Natural killer cell (primary cell): ENCODE measurements at regions of chr4 and their contacts with region 1.

Region 1: DNA sequence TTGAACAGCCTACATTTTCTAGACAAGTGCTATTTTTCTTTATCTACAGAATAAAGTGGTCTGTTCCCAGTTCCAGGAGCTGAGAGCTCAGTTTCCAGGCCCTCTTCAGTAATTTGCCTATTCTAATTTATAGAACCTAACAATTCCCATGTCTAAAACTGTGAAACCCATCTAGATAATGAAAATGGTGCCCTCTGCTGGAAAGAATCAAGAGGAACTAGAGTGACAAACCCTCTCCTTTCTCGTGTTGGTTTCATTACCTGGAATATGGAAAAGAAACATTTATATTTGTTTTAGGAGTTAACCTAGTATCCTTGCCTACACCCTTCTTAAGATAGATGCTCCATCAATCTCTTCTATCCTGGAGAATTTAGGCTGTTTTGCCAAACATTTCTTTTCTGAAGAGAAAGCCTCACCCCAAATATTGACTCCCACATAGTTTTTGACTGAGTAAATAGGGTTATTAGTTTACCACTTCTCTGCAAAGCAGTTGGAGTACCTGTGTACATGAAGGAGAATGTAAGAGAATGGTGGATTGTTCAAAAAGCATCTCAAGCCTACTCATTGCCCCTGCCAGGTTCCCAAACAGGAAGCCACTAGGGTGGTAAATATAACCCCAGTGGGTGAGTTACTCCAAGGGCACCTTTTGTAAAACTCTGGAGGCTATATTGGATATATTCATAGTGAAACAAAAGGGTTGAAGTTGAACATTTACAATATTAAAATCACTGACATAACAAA is 121.6 kb downstream of the RASL11B start:
- DNase-seq: peak in 1 of 2 donors; percentile 68
- ATAC-seq: peak in 1 of 3 donors; percentile 55
- H3K4me3 ChIP-seq: no peak overlapping the region
- H3K4me3 Mint-ChIP-seq: no peak overlapping the region
- H3K27ac ChIP-seq: no peak overlapping the region
- H3K27ac Mint-ChIP-seq: no peak overlapping the region
- H3K4me1 ChIP-seq: no peaks in the 10 kb centered on the region
- H3K4me1 Mint-ChIP-seq: no peaks in the 10 kb centered on the region
- H3K27me3 ChIP-seq: no peaks in the 10 kb centered on the region
- H3K27me3 Mint-ChIP-seq: no peaks in the 10 kb centered on the region
- CTCF ChIP-seq: peak; percentile 69

Region 2: GRCh38 chr4:51895813-51896408 is 1087.8 kb before region 1 on chr4:
- intact Hi-C with region 1: loop called (anchors 5 kb)
- DNase-seq: peak in 1 of 2 donors; percentile 70
- ATAC-seq: peak; percentile 89 to 99 (median 95)
- H3K4me3 ChIP-seq: no peak overlapping the region
- H3K4me3 Mint-ChIP-seq: no peak overlapping the region
- H3K27ac ChIP-seq: no peak overlapping the region
- H3K27ac Mint-ChIP-seq: peak overlapping the region in 1 of 2 donors; percentile 21
- H3K4me1 ChIP-seq: no peaks in the 10 kb centered on the region
- H3K4me1 Mint-ChIP-seq: peaks cover 0 to 8% of the 10 kb centered on the region in 2 donors
- H3K27me3 ChIP-seq: no peaks in the 10 kb centered on the region
- H3K27me3 Mint-ChIP-seq: no peaks in the 10 kb centered on the region
- CTCF ChIP-seq: peak; percentile 84

Region 3: GRCh38 chr4:52545099-52546069 is 438.3 kb before region 1 on chr4:
- intact Hi-C with region 1: loop called (anchors 2 kb)
- DNase-seq: peak; percentile 40 to 73
- ATAC-seq: peak; percentile 49 to 80 (median 60)
- H3K4me3 ChIP-seq: no peak overlapping the region
- H3K4me3 Mint-ChIP-seq: no peak overlapping the region
- H3K27ac ChIP-seq: no peak overlapping the region
- H3K27ac Mint-ChIP-seq: no peak overlapping the region
- H3K4me1 ChIP-seq: no peaks in the 10 kb centered on the region
- H3K4me1 Mint-ChIP-seq: peaks cover 0 to 6% of the 10 kb centered on the region in 2 donors
- H3K27me3 ChIP-seq: no peaks in the 10 kb centered on the region
- H3K27me3 Mint-ChIP-seq: peaks cover 0 to 20% of the 10 kb centered on the region in 2 donors
- CTCF ChIP-seq: peak; percentile 68

Region 4: GRCh38 chr4:52588097-52588782 is 395.5 kb before region 1 on chr4:
- intact Hi-C with region 1: loop called (anchors 5 kb)
- DNase-seq: peak in 1 of 2 donors; percentile 28
- ATAC-seq: peak in 1 of 3 donors; percentile 42
- H3K4me3 ChIP-seq: no peak overlapping the region
- H3K4me3 Mint-ChIP-seq: no peak overlapping the region
- H3K27ac ChIP-seq: no peak overlapping the region
- H3K27ac Mint-ChIP-seq: peak overlapping the region; percentile 8 to 14
- H3K4me1 ChIP-seq: peaks cover 13% of the 10 kb centered on the region
- H3K4me1 Mint-ChIP-seq: peaks cover 9 to 14% of the 10 kb centered on the region in 2 donors
- H3K27me3 ChIP-seq: no peaks in the 10 kb centered on the region
- H3K27me3 Mint-ChIP-seq: peaks cover 0 to 5% of the 10 kb centered on the region in 2 donors
- CTCF ChIP-seq: no peak